Endothelial cell of umbilical vein (primary cell): ENCODE measurements at regions of chr6 and their contacts with region 1.

Region 1: GRCh38 chr6:165573671-165574070 is 89.4 kb downstream of the PDE10A start:
- DNase-seq: peak; percentile 97
- H3K4me3 ChIP-seq: no peak overlapping the region
- H3K27ac ChIP-seq: peak overlapping the region; percentile 69
- H3K4me1 ChIP-seq: peaks cover 19% of the 10 kb centered on the region
- H3K27me3 ChIP-seq: no peaks in the 10 kb centered on the region
- CTCF ChIP-seq: no peak
- POLR2A ChIP-seq: peak; percentile 26

Region 2: GRCh38 chr6:164322533-164322932 is 1251.1 kb before region 1 on chr6:
- CTCF ChIA-PET with region 1: no interaction called
- POLR2A ChIA-PET with region 1: no interaction called
- dilution Hi-C with region 1: no loop called
- intact Hi-C with region 1: loop called (anchors 10 kb)
- DNase-seq: peak; percentile 89
- H3K4me3 ChIP-seq: no peak overlapping the region
- H3K27ac ChIP-seq: peak overlapping the region; percentile 62
- H3K4me1 ChIP-seq: peaks cover 22% of the 10 kb centered on the region
- H3K27me3 ChIP-seq: no peaks in the 10 kb centered on the region
- CTCF ChIP-seq: no peak
- POLR2A ChIP-seq: no peak

Region 3: GRCh38 chr6:165236326-165236725 is 337.3 kb before region 1 on chr6:
- CTCF ChIA-PET with region 1: no interaction called
- POLR2A ChIA-PET with region 1: no interaction called
- dilution Hi-C with region 1: no loop called
- intact Hi-C with region 1: no loop called
- DNase-seq: no peak
- H3K4me3 ChIP-seq: no peak overlapping the region
- H3K27ac ChIP-seq: no peak overlapping the region
- H3K4me1 ChIP-seq: no peaks in the 10 kb centered on the region
- H3K27me3 ChIP-seq: no peaks in the 10 kb centered on the region
- CTCF ChIP-seq: no peak
- POLR2A ChIP-seq: no peak

Region 4: GRCh38 chr6:165404697-165405096 is 169.0 kb before region 1 on chr6:
- CTCF ChIA-PET with region 1: no interaction called
- POLR2A ChIA-PET with region 1: no interaction called
- dilution Hi-C with region 1: no loop called
- intact Hi-C with region 1: no loop called
- DNase-seq: no peak
- H3K4me3 ChIP-seq: no peak overlapping the region
- H3K27ac ChIP-seq: no peak overlapping the region
- H3K4me1 ChIP-seq: no peaks in the 10 kb centered on the region
- H3K27me3 ChIP-seq: no peaks in the 10 kb centered on the region
- CTCF ChIP-seq: no peak
- POLR2A ChIP-seq: no peak

Region 5: GRCh38 chr6:165585060-165585459 is 11.4 kb after region 1 on chr6:
- CTCF ChIA-PET with region 1: interaction called, 6 read pairs
- POLR2A ChIA-PET with region 1: interaction called, 3 read pairs
- dilution Hi-C with region 1: no loop called
- intact Hi-C with region 1: loop called (anchors 1 kb)
- DNase-seq: peak; percentile 63
- H3K4me3 ChIP-seq: no peak overlapping the region
- H3K27ac ChIP-seq: peak overlapping the region; percentile 42
- H3K4me1 ChIP-seq: peaks cover 3% of the 10 kb centered on the region
- H3K27me3 ChIP-seq: no peaks in the 10 kb centered on the region
- CTCF ChIP-seq: no peak
- POLR2A ChIP-seq: no peak

Region 6: DNA sequence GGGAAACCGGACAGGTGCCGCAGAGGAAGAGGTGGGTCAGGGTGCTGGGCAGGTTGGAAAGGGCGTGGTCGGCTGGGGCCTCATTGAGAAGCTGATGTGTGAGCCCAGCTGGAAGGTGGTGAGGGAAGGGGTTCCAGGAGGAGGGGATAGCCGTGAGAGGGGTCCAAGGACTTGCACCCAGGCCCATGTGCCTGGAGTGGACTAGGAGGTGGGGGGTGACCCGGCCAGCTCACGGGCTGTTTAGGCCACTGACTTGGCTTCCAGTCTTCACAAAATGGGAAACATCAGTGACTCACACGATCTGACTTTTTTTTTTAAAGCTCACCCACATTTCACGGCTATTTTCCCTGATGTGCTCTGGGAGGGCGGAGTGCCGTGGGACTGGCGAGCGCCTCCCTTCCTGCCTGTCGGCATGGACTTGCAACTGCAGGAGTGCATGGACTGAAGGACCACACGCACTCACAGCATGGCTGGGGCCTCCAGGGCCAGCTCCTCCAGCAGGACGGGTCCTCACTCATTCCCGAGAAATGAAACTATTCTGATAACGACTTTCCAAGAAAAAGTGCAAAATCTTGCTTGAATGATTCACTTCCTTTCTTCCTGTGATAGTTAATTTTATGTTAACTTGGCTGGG is 102.9 kb after region 1 on chr6:
- CTCF ChIA-PET with region 1: interaction called, 7 read pairs
- POLR2A ChIA-PET with region 1: no interaction called
- dilution Hi-C with region 1: no loop called
- intact Hi-C with region 1: loop called (anchors 5 kb)
- DNase-seq: peak; percentile 89
- H3K4me3 ChIP-seq: no peak overlapping the region
- H3K27ac ChIP-seq: peak overlapping the region; percentile 25
- H3K4me1 ChIP-seq: peaks cover 9% of the 10 kb centered on the region
- H3K27me3 ChIP-seq: no peaks in the 10 kb centered on the region
- CTCF ChIP-seq: peak; percentile 32 to 68
- POLR2A ChIP-seq: no peak

Region 7: DNA sequence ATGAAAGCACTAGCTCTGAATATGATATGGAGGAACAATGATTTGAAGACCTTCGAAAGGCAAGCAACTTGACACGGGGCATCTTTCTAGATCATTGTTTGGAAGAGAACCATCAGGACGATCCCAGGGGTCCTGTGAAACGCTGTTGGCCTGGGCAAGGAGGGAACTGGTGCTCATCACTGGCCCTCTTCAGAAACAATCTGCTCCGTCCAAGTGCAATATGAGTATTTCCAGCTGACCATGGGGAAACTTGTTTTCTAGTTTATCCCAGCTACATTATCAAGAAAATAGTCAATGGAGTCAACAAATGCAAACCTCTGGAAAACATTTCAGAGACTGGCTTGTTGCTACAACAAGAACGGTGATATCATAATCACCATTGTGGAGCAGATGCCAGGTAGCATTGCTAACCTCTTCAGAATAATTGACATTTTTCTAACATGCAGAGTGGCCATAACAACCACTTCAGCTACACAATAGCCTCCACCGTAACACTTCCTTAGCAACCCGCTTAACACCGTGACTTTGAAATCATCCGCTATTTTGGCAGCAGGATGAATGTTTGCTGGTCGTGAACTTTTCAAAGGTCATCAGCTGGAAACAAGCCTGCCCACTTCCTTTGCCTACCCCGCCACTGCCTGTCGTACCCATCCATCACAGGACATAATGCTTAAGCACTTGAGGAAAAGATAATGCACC is 201.4 kb after region 1 on chr6:
- CTCF ChIA-PET with region 1: no interaction called
- POLR2A ChIA-PET with region 1: no interaction called
- dilution Hi-C with region 1: no loop called
- intact Hi-C with region 1: loop called (anchors 1 kb)
- DNase-seq: peak; percentile 99
- H3K4me3 ChIP-seq: peak overlapping the region in 1 of 3 experiments; percentile 5
- H3K27ac ChIP-seq: peak overlapping the region; percentile 92
- H3K4me1 ChIP-seq: peaks cover 12% of the 10 kb centered on the region
- H3K27me3 ChIP-seq: peaks cover 0 to 1% of the 10 kb centered on the region in 2 experiments
- CTCF ChIP-seq: no peak
- POLR2A ChIP-seq: no peak